HCT116 (cell line): ENCODE measurements at regions of chr1 and their contacts with region 1.

Region 1: GRCh38 chr1:95309031-95309471 is 75.0 kb downstream of the RWDD3 start:
- DNase-seq: peak; percentile 42
- ATAC-seq: peak; percentile 85
- H3K4me3 ChIP-seq: no peak overlapping the region
- H3K27ac ChIP-seq: no peak overlapping the region
- H3K4me1 ChIP-seq: peaks cover 0 to 4% of the 10 kb centered on the region in 2 experiments; a peak in 1 of 4 replicates
- H3K27me3 ChIP-seq: no peaks in the 10 kb centered on the region
- CTCF ChIP-seq: peak; percentile 47 to 79 (median 69); a peak in 5 of 6 replicates
- POLR2A ChIP-seq: no peak
- RAD21 ChIP-seq: peak; percentile 76

Region 2: GRCh38 chr1:95002540-95003432 is 306.3 kb before region 1 on chr1:
- CTCF ChIA-PET with region 1: no interaction called
- POLR2A ChIA-PET with region 1: no interaction called
- RAD21 ChIA-PET with region 1: no interaction called
- intact Hi-C with region 1: no loop called
- DNase-seq: no peak
- ATAC-seq: no peak
- H3K4me3 ChIP-seq: no peak overlapping the region
- H3K27ac ChIP-seq: no peak overlapping the region
- H3K4me1 ChIP-seq: peaks cover 3 to 18% of the 10 kb centered on the region in 2 experiments; a peak in 3 of 4 replicates
- H3K27me3 ChIP-seq: no peaks in the 10 kb centered on the region
- CTCF ChIP-seq: no peak
- POLR2A ChIP-seq: no peak
- RAD21 ChIP-seq: no peak

Region 3: GRCh38 chr1:95467036-95467435 is 158.0 kb after region 1 on chr1:
- CTCF ChIA-PET with region 1: no interaction called
- POLR2A ChIA-PET with region 1: no interaction called
- RAD21 ChIA-PET with region 1: no interaction called
- intact Hi-C with region 1: loop called (anchors 1 kb)
- DNase-seq: no peak
- ATAC-seq: no peak
- H3K4me3 ChIP-seq: no peak overlapping the region
- H3K27ac ChIP-seq: no peak overlapping the region
- H3K4me1 ChIP-seq: no peaks in the 10 kb centered on the region
- H3K27me3 ChIP-seq: no peaks in the 10 kb centered on the region
- CTCF ChIP-seq: peak; percentile 10 to 34 (median 12); a peak in 1 of 6 replicates
- POLR2A ChIP-seq: no peak
- RAD21 ChIP-seq: peak; percentile 40